ENCODE measurements at regions of chr6 and their contacts with region 1.

Region 1: GRCh38 chr6:31597006-31597405 is 4.2 kb upstream of the NCR3 start:
- DNase-seq: no peak
- ATAC-seq: peak; percentile 49
- H3K4me3 Mint-ChIP-seq: no peak overlapping the region
- H3K27ac Mint-ChIP-seq: no peak overlapping the region
- H3K4me1 Mint-ChIP-seq: peaks cover 17% of the 10 kb centered on the region
- H3K27me3 Mint-ChIP-seq: no peaks in the 10 kb centered on the region
- CTCF ChIP-seq: peak; percentile 48

Region 2: GRCh38 chr6:31441365-31442267 is 155.4 kb before region 1 on chr6:
- CTCF ChIA-PET with region 1: interaction called, 11 read pairs
- POLR2A ChIA-PET with region 1: no interaction called
- DNase-seq: peak; percentile 91
- ATAC-seq: peak; percentile 87
- H3K4me3 Mint-ChIP-seq: no peak overlapping the region
- H3K27ac Mint-ChIP-seq: no peak overlapping the region
- H3K4me1 Mint-ChIP-seq: peaks cover 13% of the 10 kb centered on the region
- H3K27me3 Mint-ChIP-seq: peaks cover 39% of the 10 kb centered on the region
- CTCF ChIP-seq: peak; percentile 71

Region 3: GRCh38 chr6:31546962-31547726 is 49.9 kb before region 1 on chr6 and contains the start of gene NFKBIL1:
- CTCF ChIA-PET with region 1: interaction called, 319 read pairs
- POLR2A ChIA-PET with region 1: interaction called, 6 read pairs
- DNase-seq: peak; percentile 94
- ATAC-seq: peak; percentile 67
- H3K4me3 Mint-ChIP-seq: peak within 1 kb of the TSS; percentile 82
- H3K27ac Mint-ChIP-seq: peak within 1 kb of the TSS; percentile 98
- H3K4me1 Mint-ChIP-seq: peaks cover 22% of the 10 kb centered on the region
- H3K27me3 Mint-ChIP-seq: no peaks in the 10 kb centered on the region
- CTCF ChIP-seq: no peak
- total RNA-seq, gene NFKBIL1: 14.9 to 19.5 TPM (median 17.1 TPM) in 3 replicates

Region 4: DNA sequence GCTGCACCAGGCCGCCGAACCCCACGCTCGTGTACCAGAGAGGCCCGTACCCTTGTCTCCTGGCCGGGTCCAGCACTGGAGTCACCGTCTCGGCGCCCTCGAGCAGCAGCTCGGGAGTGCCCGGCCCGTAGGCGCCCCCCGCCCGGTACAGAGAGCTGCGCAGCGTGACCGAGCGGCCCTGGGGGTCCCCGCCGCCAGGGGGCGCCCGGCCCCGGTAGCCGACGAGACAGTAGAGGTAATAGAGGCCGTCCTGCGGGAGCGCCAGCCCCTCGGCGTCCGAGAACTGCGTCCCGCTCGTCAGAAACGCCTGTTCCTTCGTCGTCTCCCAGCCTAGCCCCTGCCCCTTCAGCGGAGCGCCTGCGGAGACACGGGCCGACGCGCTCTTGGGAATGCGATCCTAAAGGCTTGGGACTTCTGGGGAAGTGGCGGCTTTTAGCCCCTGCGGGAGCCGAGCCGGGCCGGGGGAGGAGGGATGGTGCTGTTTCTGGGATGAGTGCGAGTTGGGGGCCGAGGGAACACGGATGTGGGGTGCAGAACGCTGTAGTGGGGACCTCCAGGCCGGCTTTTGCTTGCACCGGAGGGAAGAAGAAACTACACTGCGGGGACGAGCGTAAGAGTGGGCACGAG is 16.1 kb before region 1 on chr6:
- CTCF ChIA-PET with region 1: interaction called, 293 read pairs
- POLR2A ChIA-PET with region 1: interaction called, 3 read pairs
- DNase-seq: peak; percentile 90
- ATAC-seq: peak; percentile 72
- H3K4me3 Mint-ChIP-seq: peak overlapping the region; percentile 92
- H3K27ac Mint-ChIP-seq: peak overlapping the region; percentile 10; the same call in 1 of the 2 replicates
- H3K4me1 Mint-ChIP-seq: peaks cover 38% of the 10 kb centered on the region
- H3K27me3 Mint-ChIP-seq: peaks cover 48% of the 10 kb centered on the region
- CTCF ChIP-seq: peak; percentile 95

Region 5: GRCh38 chr6:31619805-31620585 is 23.0 kb after region 1 on chr6:
- CTCF ChIA-PET with region 1: interaction called, 24 read pairs
- POLR2A ChIA-PET with region 1: no interaction called
- DNase-seq: peak; percentile 97
- ATAC-seq: peak; percentile 91
- H3K4me3 Mint-ChIP-seq: peak overlapping the region; percentile 92
- H3K27ac Mint-ChIP-seq: peak overlapping the region; percentile 100
- H3K4me1 Mint-ChIP-seq: peaks cover 31% of the 10 kb centered on the region
- H3K27me3 Mint-ChIP-seq: no peaks in the 10 kb centered on the region; the same call in 1 of the 2 replicates
- CTCF ChIP-seq: no peak

Region 6: DNA sequence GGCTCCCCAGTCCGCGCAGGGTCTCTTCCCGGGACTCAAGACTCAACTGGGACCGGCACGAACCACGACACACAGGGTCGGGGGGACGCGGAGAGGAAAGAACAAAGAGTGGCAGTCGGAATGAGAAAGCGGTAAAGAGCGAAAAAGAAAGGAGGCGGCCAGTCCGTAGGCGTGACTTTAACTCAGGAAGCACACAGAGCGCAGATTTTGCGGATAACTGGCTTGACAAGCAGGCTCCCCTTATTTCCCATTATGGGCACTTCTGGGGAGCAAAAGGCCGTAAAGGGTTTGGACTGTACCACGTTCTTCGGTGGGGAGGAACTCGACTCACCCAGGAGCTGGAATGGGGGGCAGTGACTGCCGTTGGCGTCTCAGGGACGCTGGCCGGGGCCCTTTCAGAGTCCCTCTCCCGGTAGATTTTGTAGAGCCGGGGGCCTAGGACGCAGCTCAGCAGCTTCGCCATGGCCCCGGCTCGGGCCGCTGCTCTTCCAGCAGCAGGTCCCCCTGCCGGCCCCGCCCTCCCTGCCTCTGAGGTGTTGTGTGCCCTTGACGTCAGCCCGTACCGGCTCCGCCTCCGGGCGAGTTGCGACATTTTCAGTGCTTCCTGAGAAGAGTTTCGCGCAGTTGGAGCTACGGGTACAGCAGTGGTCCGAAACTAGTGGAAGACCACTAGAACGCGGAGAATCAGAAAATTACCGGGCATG is 106.0 kb after region 1 on chr6 and contains the start of gene ABHD16A:
- CTCF ChIA-PET with region 1: no interaction called
- POLR2A ChIA-PET with region 1: no interaction called
- DNase-seq: peak; percentile 98
- ATAC-seq: peak; percentile 95
- H3K4me3 Mint-ChIP-seq: peak within 1 kb of the TSS; percentile 95
- H3K27ac Mint-ChIP-seq: peak within 1 kb of the TSS; percentile 99
- H3K4me1 Mint-ChIP-seq: peaks cover 12% of the 10 kb centered on the region
- H3K27me3 Mint-ChIP-seq: peaks cover 7% of the 10 kb centered on the region; the same call in 1 of the 2 replicates
- CTCF ChIP-seq: no peak
- total RNA-seq, gene ABHD16A: 28.6 to 30.3 TPM (median 29.8 TPM) in 3 replicates